Activated B cell treated with CpG ODN at 0.5 μM for 24 hours (primary cell): ENCODE measurements at regions of chr17 and their contacts with region 1.

Region 1: DNA sequence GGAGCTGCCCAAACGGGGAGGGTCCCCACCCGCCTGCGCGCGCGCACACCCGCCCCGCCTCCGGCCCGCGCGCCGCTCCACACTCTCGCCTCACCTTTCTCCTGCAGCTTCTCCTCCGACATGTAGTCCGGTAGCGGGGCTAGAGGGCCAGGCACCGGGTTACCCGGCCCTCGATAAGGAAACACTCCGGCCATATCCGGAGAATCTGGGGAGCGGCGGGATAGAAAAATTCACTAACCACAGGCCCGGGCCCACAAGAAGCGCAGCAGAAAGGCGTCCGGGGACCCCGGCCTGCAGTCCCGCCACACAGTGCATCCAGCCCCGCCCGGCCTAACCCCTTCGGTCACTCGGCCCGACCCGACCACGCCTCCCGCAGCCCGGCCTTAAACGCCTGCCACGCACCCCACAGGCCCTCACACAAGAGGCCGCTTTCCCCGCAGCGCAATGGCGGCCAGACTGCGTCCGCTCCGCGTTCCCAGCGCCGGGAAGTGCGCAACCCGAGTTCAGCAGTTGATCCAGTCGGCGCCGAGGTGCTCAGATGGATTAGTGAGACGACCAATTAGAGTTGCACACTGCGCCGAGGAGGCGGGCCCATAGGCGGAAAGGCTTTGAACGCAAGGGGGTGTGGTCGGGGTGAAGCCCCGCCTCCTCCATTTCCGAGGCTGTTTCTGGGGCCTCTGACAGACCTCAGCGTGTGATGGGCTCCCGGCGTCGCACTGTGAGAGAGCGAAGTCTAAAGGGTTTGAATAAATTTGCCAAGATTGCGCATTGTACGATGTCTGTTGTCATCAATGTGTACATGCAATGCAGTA is at the start of gene PRPF8:
- DNase-seq: peak; percentile 95
- ATAC-seq: peak; percentile 99
- H3K4me3 Mint-ChIP-seq: peak within 1 kb of the TSS; percentile 100
- H3K27ac Mint-ChIP-seq: peak within 1 kb of the TSS; percentile 96
- H3K4me1 Mint-ChIP-seq: peaks cover 33% of the 10 kb centered on the region
- H3K27me3 Mint-ChIP-seq: no peaks in the 10 kb centered on the region
- CTCF ChIP-seq: no peak
- total RNA-seq, gene PRPF8: 401 and 442 TPM in 2 replicates

Region 2: GRCh38 chr17:1673041-1673785 is 11.4 kb before region 1 on chr17:
- CTCF ChIA-PET with region 1: interaction called, 4 read pairs
- POLR2A ChIA-PET with region 1: interaction called, 8 read pairs
- intact Hi-C with region 1: loop called (anchors 1 kb)
- DNase-seq: no peak
- ATAC-seq: no peak
- H3K4me3 Mint-ChIP-seq: no peak overlapping the region
- H3K27ac Mint-ChIP-seq: no peak overlapping the region
- H3K4me1 Mint-ChIP-seq: no peaks in the 10 kb centered on the region
- H3K27me3 Mint-ChIP-seq: no peaks in the 10 kb centered on the region
- CTCF ChIP-seq: no peak

Region 3: DNA sequence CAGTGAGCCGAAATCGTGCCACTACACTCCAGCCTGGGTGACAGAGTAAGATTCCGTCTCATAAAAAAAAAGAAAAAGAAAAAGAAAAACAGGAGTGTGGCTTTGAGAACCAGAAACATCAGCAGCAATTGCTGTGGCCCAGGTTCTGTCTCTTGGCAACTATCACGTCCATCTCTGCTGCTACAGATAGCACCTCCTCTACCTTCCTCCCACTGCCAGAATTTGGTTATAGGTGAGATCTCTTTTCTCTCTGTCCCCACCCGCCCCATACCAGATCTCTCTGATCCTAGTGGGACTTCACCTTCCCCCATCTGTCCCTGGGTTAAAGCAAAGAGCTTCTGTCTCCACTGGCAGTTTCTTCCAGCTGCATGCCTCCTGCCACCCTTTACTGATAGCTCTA is 22.5 kb after region 1 on chr17:
- CTCF ChIA-PET with region 1: no interaction called
- POLR2A ChIA-PET with region 1: no interaction called
- intact Hi-C with region 1: no loop called
- DNase-seq: no peak
- ATAC-seq: no peak
- H3K4me3 Mint-ChIP-seq: no peak overlapping the region
- H3K27ac Mint-ChIP-seq: no peak overlapping the region
- H3K4me1 Mint-ChIP-seq: peaks cover 8% of the 10 kb centered on the region
- H3K27me3 Mint-ChIP-seq: peaks cover 23% of the 10 kb centered on the region
- CTCF ChIP-seq: no peak

Region 4: GRCh38 chr17:1829592-1830257 is 145.1 kb after region 1 on chr17 and contains the starts of genes RPA1 and SMYD4:
- CTCF ChIA-PET with region 1: no interaction called
- POLR2A ChIA-PET with region 1: interaction called, 7 read pairs
- intact Hi-C with region 1: loop called (anchors 2 kb)
- DNase-seq: peak; percentile 94
- ATAC-seq: peak; percentile 94
- H3K4me3 Mint-ChIP-seq: peak within 1 kb of the TSS; percentile 91
- H3K27ac Mint-ChIP-seq: peak within 1 kb of the TSS; percentile 83
- H3K4me1 Mint-ChIP-seq: peaks cover 44% of the 10 kb centered on the region
- H3K27me3 Mint-ChIP-seq: no peaks in the 10 kb centered on the region
- CTCF ChIP-seq: no peak
- total RNA-seq, gene RPA1: 99.8 and 109 TPM in 2 replicates
- total RNA-seq, gene SMYD4: 19.9 and 21.8 TPM in 2 replicates